Naive thymus-derived CD4-positive, alpha-beta T cell (primary cell): ENCODE measurements at regions of chr2 and their contacts with region 1.

Region 1: DNA sequence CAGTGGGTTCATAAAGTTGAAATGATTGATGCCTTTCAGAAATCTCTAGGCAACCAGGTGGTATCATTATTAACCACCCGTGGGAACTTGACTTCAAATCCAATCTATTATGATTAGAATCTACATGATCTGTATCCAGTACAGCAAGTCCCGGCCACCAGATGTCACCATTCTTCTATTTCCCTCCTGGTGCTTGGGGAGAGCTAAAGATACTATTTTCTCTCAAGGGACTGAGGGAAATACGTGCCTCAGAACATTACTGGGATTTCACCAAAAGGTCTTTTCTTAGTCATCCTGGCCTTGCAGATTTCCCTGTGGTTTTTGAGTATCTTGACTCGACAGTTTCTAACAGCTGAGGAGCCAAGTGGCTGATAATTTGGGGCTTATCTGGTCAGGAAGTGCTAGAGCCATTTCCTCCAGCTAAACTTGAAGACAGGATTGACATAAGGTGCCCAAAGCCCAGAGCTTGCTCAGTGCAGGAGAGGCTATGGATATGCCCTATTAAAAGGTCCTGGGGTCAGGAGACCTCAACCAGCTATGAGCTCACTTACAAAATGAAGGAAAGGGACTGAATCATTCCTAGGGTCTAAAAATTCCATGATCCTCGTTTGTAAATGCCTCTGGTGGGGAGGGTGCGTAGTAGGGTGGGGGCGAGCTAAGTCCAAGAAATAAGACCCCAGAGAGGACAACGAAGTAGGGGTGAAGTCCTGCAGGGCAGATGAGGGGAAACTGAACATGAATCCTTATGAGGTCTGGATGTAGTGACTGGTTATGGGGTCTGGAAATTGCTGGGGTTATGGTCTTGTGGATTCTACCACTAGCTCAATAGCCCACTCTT is 135.4 kb upstream of the MGAT5 start:
- DNase-seq: peak; percentile 37 to 86 (median 79)
- ATAC-seq: peak; percentile 64
- H3K4me3 ChIP-seq: peak overlapping the region; percentile 93
- H3K4me3 Mint-ChIP-seq: peak overlapping the region; percentile 82 to 99 (median 96)
- H3K27ac ChIP-seq: no peak overlapping the region
- H3K27ac Mint-ChIP-seq: peak overlapping the region in 5 of 9 donors; percentile 82 to 99 (median 86)
- H3K4me1 ChIP-seq: peaks cover 15 to 32% of the 10 kb centered on the region in 2 donors
- H3K4me1 Mint-ChIP-seq: peaks cover 30 to 39% (median 35%) of the 10 kb centered on the region in 7 donors
- H3K27me3 ChIP-seq: no peaks in the 10 kb centered on the region
- H3K27me3 Mint-ChIP-seq: peaks cover 0 to 21% (median 0%) of the 10 kb centered on the region in 5 donors

Region 2: GRCh38 chr2:132267105-132267497 is 1851.4 kb before region 1 on chr2:
- CTCF ChIA-PET with region 1: no interaction called
- POLR2A ChIA-PET with region 1: no interaction called
- intact Hi-C with region 1: loop called in 1 of 2 experiments (anchors 10 kb)
- DNase-seq: no peak
- ATAC-seq: no peak
- H3K4me3 ChIP-seq: no peak overlapping the region
- H3K4me3 Mint-ChIP-seq: no peak overlapping the region
- H3K27ac ChIP-seq: no peak overlapping the region
- H3K27ac Mint-ChIP-seq: no peak overlapping the region
- H3K4me1 ChIP-seq: peaks cover 0 to 5% of the 10 kb centered on the region in 2 donors
- H3K4me1 Mint-ChIP-seq: peaks cover 0 to 5% (median 3%) of the 10 kb centered on the region in 7 donors
- H3K27me3 ChIP-seq: peaks cover 0 to 12% of the 10 kb centered on the region in 2 donors
- H3K27me3 Mint-ChIP-seq: peaks cover 0 to 7% (median 0%) of the 10 kb centered on the region in 5 donors

Region 3: DNA sequence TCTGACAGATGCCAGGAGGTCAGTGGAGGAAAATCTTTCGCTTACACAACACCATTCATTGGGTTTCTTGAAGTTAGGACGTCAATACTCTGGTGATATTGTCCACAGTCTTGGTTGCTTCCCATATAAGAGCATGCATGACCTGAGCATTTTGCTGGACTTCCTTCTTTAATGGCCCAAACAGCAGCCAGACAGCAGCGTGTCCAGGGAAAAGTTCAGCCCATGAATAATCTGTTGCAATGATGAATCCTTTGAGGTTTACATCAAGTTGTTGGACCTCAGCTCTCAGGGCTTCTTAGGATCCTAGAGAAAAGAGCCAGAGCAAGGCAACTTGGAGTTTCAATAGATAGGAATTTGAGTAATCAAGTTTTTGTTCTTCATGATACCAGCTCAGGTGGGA is 20.2 kb before region 1 on chr2:
- CTCF ChIA-PET with region 1: no interaction called
- POLR2A ChIA-PET with region 1: no interaction called
- intact Hi-C with region 1: no loop called
- DNase-seq: no peak
- ATAC-seq: no peak
- H3K4me3 ChIP-seq: no peak overlapping the region
- H3K4me3 Mint-ChIP-seq: no peak overlapping the region
- H3K27ac ChIP-seq: no peak overlapping the region
- H3K27ac Mint-ChIP-seq: no peak overlapping the region
- H3K4me1 ChIP-seq: no peaks in the 10 kb centered on the region
- H3K4me1 Mint-ChIP-seq: peaks cover 0 to 2% (median 0%) of the 10 kb centered on the region in 7 donors
- H3K27me3 ChIP-seq: no peaks in the 10 kb centered on the region
- H3K27me3 Mint-ChIP-seq: peaks cover 5 to 22% (median 18%) of the 10 kb centered on the region in 5 donors

Region 4: DNA sequence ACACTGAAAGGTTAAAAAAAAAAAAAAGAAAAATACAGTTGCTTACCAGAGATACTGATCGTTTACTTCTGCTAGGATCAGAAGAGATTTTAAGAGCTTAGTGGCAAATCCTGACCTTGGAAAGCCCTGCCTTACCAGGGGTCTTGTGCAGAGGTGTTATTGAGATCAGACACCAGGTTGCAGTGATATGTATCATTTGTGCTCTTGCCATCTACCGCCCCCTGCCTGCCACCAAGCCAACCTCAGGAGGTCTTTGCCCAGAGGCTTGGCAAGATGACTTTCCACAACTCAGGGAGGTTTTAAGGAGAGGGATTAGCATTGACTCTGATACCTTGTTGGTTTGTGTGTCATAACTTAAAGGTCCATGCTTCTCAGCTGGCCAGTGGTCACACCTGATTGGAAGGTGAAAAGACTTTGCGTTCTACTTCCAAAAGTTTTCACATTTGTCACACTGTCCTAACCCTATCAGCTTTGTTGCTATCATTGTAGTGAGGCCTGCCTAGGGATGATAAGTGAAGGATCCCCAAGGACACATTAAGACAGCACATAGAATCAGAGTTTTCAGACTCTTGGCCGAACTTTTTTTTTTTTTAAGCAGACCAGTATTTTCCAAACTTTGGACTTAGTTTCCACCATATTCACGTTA is 89.2 kb after region 1 on chr2:
- CTCF ChIA-PET with region 1: interaction called, 93 read pairs
- POLR2A ChIA-PET with region 1: interaction called, 35 read pairs
- intact Hi-C with region 1: loop called (anchors 1 to 5 kb)
- DNase-seq: peak; percentile 39 to 62 (median 53)
- ATAC-seq: peak; percentile 92
- H3K4me3 ChIP-seq: no peak overlapping the region
- H3K4me3 Mint-ChIP-seq: no peak overlapping the region
- H3K27ac ChIP-seq: no peak overlapping the region
- H3K27ac Mint-ChIP-seq: peak overlapping the region in 1 of 9 donors; percentile 53
- H3K4me1 ChIP-seq: peaks cover 21 to 34% of the 10 kb centered on the region in 2 donors
- H3K4me1 Mint-ChIP-seq: peaks cover 5 to 17% (median 11%) of the 10 kb centered on the region in 7 donors
- H3K27me3 ChIP-seq: no peaks in the 10 kb centered on the region
- H3K27me3 Mint-ChIP-seq: no peaks in the 10 kb centered on the region

Region 5: GRCh38 chr2:134261398-134262131 is 143.1 kb after region 1 on chr2:
- CTCF ChIA-PET with region 1: interaction called, 10 read pairs
- POLR2A ChIA-PET with region 1: interaction called, 3 read pairs
- intact Hi-C with region 1: loop called in 1 of 2 experiments (anchors 1 kb)
- DNase-seq: no peak
- ATAC-seq: no peak
- H3K4me3 ChIP-seq: no peak overlapping the region
- H3K4me3 Mint-ChIP-seq: peak overlapping the region in 9 of 10 donors; percentile 15 to 71 (median 34)
- H3K27ac ChIP-seq: no peak overlapping the region
- H3K27ac Mint-ChIP-seq: peak overlapping the region in 8 of 9 donors; percentile 2 to 93 (median 54)
- H3K4me1 ChIP-seq: peaks cover 27 to 61% of the 10 kb centered on the region in 2 donors
- H3K4me1 Mint-ChIP-seq: peaks cover 46 to 77% (median 71%) of the 10 kb centered on the region in 7 donors
- H3K27me3 ChIP-seq: no peaks in the 10 kb centered on the region
- H3K27me3 Mint-ChIP-seq: no peaks in the 10 kb centered on the region

Region 6: DNA sequence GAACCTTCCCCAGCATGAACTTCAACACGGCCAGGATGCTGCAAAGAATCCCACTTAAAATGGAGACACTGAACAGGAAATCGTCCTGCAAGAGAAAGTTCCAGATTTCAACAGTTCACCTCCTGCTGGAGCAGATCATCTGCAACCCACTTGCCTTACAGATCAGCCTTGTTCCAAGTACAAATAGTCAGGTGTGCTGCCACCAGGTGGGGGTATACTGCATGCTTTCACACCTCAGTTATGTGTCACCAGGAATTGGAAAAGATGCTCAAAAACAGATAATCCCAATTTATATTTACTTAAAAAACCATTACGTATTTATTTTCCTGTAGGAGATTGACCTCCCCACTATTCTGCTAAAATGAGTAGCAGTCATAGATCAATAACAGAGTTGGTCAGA is 347.6 kb after region 1 on chr2:
- CTCF ChIA-PET with region 1: no interaction called
- POLR2A ChIA-PET with region 1: no interaction called
- intact Hi-C with region 1: loop called in 1 of 2 experiments (anchors 5 kb)
- DNase-seq: peak in 4 of 9 donors; percentile 14 to 31 (median 18)
- ATAC-seq: no peak
- H3K4me3 ChIP-seq: no peak overlapping the region
- H3K4me3 Mint-ChIP-seq: no peak overlapping the region
- H3K27ac ChIP-seq: no peak overlapping the region
- H3K27ac Mint-ChIP-seq: peak overlapping the region in 1 of 9 donors; percentile 86
- H3K4me1 ChIP-seq: no peaks in the 10 kb centered on the region
- H3K4me1 Mint-ChIP-seq: no peaks in the 10 kb centered on the region
- H3K27me3 ChIP-seq: no peaks in the 10 kb centered on the region
- H3K27me3 Mint-ChIP-seq: no peaks in the 10 kb centered on the region

Region 7: GRCh38 chr2:134918526-134919340 is 800.2 kb after region 1 on chr2 and contains the start of gene CCNT2:
- CTCF ChIA-PET with region 1: no interaction called
- POLR2A ChIA-PET with region 1: interaction called, 3 read pairs
- intact Hi-C with region 1: loop called (anchors 1 kb)
- DNase-seq: peak; percentile 99 to 100 (median 100)
- ATAC-seq: peak; percentile 90
- H3K4me3 ChIP-seq: peak within 1 kb of the TSS; percentile 96
- H3K4me3 Mint-ChIP-seq: peak within 1 kb of the TSS; percentile 86 to 98 (median 93)
- H3K27ac ChIP-seq: peak within 1 kb of the TSS; percentile 97
- H3K27ac Mint-ChIP-seq: peak within 1 kb of the TSS; percentile 91 to 99 (median 96)
- H3K4me1 ChIP-seq: peaks cover 31 to 45% of the 10 kb centered on the region in 2 donors
- H3K4me1 Mint-ChIP-seq: peaks cover 18 to 71% (median 48%) of the 10 kb centered on the region in 7 donors
- H3K27me3 ChIP-seq: no peaks in the 10 kb centered on the region
- H3K27me3 Mint-ChIP-seq: peaks cover 0 to 14% (median 0%) of the 10 kb centered on the region in 5 donors
- total RNA-seq, gene CCNT2: 49.8 to 78.1 (median 67.9) TPM

Region 8: GRCh38 chr2:135876066-135876711 is 1757.7 kb after region 1 on chr2 and contains the start of gene MCM6:
- CTCF ChIA-PET with region 1: no interaction called
- POLR2A ChIA-PET with region 1: no interaction called
- intact Hi-C with region 1: loop called in 1 of 2 experiments (anchors 10 kb)
- DNase-seq: peak; percentile 91 to 99 (median 97)
- ATAC-seq: peak; percentile 96
- H3K4me3 ChIP-seq: peak within 1 kb of the TSS; percentile 83
- H3K4me3 Mint-ChIP-seq: peak within 1 kb of the TSS; percentile 85 to 97 (median 93)
- H3K27ac ChIP-seq: peak within 1 kb of the TSS; percentile 84
- H3K27ac Mint-ChIP-seq: peak within 1 kb of the TSS; percentile 84 to 97 (median 95)
- H3K4me1 ChIP-seq: peaks cover 12 to 18% of the 10 kb centered on the region in 2 donors
- H3K4me1 Mint-ChIP-seq: peaks cover 23 to 44% (median 41%) of the 10 kb centered on the region in 7 donors
- H3K27me3 ChIP-seq: no peaks in the 10 kb centered on the region
- H3K27me3 Mint-ChIP-seq: peaks cover 0 to 5% (median 0%) of the 10 kb centered on the region in 5 donors
- total RNA-seq, gene MCM6: 12.1 to 105 (median 21.6) TPM